ENCODE measurements at regions of chr19 and their contacts with region 1.

Region 1: DNA sequence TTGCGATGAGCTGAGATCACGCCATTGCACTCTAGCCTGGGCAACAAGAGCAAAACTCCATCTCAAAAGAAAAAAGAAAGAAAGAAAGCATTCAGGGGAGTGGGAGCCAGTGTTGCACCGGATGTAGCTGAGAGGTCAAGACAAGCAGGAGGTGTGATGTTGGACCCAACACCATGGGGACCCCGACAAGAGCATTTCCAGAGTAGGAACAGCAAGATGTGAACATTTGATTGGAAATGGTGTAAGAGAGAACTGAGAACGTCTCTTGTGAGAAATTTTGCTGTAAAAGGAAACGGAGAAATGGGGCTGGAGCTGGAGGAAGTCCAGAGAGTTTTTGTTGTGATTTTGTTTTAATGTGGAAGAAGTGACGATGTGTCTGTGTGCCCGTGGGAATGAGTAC is 15.8 kb upstream of the DPF1 start:
- DNase-seq: no peak

Region 2: GRCh38 chr19:38073841-38074685 is 165.8 kb before region 1 on chr19:
- intact Hi-C with region 1: no loop called
- DNase-seq: peak in 35 of 42 donors; percentile 15 to 79 (median 45)

Region 3: DNA sequence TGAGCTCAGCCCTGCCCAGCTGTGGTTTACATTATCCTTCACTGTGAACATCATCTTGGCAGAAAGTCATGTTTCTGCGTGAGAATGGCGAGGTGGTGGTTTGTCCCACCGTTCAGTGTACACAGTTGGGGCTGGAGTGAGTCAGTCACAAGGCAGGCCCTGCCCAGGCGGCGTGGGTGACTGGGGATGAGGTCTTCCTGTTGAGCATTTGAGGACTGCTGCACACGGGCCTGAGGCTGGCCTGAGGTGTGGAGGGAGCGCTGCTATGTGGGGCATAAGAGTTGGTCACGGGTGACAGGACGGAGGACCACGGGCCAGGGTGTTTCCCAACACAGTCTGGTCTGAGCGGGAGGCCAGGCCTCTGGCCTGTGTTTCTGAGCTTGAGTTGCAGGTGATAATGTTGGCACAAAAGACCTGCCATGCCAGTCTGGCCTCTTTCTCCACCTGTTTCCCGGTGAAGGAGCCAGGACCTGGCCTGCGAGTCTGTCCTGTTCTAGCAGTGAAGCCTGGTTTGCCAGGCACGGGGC is 50.9 kb after region 1 on chr19:
- intact Hi-C with region 1: no loop called
- DNase-seq: no peak

Region 4: GRCh38 chr19:38315657-38316476 is 76.1 kb after region 1 on chr19 and contains the start of gene YIF1B:
- intact Hi-C with region 1: loop called (anchors 5 kb)
- DNase-seq: peak; percentile 91 to 99 (median 98)

Measured in head of caudate nucleus (tissue), 42 donors.